Activated CD8-positive, alpha-beta T cell treated with anti-CD3 and anti-CD28 coated beads, Interleukin-2, amount 10 ng/mL, durations not matched to agents 7 days and 5 days (primary cell): ENCODE measurements at regions of chr10 and their contacts with region 1.

Region 1: DNA sequence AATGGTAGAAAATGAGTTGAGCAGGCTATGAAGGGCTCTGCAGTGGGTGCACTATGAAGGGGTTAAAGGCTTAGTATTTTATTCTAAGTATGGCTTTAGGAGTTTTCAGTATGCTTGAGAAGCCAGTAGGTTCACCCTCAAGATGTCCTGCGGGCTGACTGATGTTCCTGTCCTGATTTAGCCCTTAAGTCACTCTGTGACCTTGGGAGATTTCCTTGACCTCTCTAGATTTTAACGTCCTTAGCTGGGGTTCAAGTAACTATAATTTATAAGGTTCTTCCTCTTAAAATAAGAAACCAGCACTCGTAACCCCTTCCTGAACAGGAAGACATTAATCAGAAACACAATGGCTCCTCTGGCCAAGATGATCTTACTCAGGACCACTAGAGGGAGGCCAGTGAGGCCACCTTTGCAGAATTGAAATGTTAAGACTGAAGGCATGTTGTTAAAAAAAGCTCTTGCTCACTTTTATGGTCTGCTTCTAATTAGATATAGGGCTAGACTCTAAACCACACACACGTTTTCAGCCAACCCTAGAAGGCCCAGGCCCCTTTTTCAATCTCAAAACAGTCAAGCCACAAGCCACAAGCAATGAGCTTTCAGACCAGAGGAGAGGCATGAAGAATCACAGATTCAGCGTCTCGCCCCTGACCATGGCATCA is 41.9 kb downstream of the CDK1 start:
- DNase-seq: no peak
- ATAC-seq: no peak
- H3K4me3 Mint-ChIP-seq: no peak overlapping the region
- H3K27ac Mint-ChIP-seq: no peak overlapping the region
- H3K4me1 Mint-ChIP-seq: peaks cover 11% of the 10 kb centered on the region
- H3K27me3 Mint-ChIP-seq: peaks cover 7% of the 10 kb centered on the region

Region 2: GRCh38 chr10:60964257-60965235 is 144.3 kb after region 1 on chr10:
- CTCF ChIA-PET with region 1: interaction called, 10 read pairs
- POLR2A ChIA-PET with region 1: no interaction called
- DNase-seq: peak; percentile 67
- ATAC-seq: no peak
- H3K4me3 Mint-ChIP-seq: no peak overlapping the region
- H3K27ac Mint-ChIP-seq: no peak overlapping the region
- H3K4me1 Mint-ChIP-seq: peaks cover 14% of the 10 kb centered on the region
- H3K27me3 Mint-ChIP-seq: peaks cover 5% of the 10 kb centered on the region